Activated T-helper 2 cell treated with anti-CD3 and anti-CD28 coated beads, Interferon-gamma antibody, Interleukin-2, Interleukin-4, amounts not matched to agents 10 μg/mL and 5 μg/mL and 100 μg/mL, durations not matched to agents 14 hours and 24 hours and 36 hours (primary cell): ENCODE measurements at regions of chr10 and their contacts with region 1.

Region 1: GRCh38 chr10:114615600-114616007 is 42.5 kb downstream of the ABLIM1 start:
- DNase-seq: peak; percentile 16
- H3K4me3 Mint-ChIP-seq: no peak overlapping the region
- H3K27ac Mint-ChIP-seq: peak overlapping the region; percentile 44
- H3K4me1 Mint-ChIP-seq: peaks cover 30% of the 10 kb centered on the region
- H3K27me3 Mint-ChIP-seq: no peaks in the 10 kb centered on the region

Region 2: GRCh38 chr10:114173921-114174694 is 441.5 kb before region 1 on chr10 and contains the start of gene CCDC186:
- intact Hi-C with region 1: loop called (anchors 5 kb)
- DNase-seq: peak; percentile 95
- H3K4me3 Mint-ChIP-seq: peak within 1 kb of the TSS; percentile 97
- H3K27ac Mint-ChIP-seq: peak within 1 kb of the TSS; percentile 95
- H3K4me1 Mint-ChIP-seq: peaks cover 24% of the 10 kb centered on the region
- H3K27me3 Mint-ChIP-seq: peaks cover 26% of the 10 kb centered on the region
- total RNA-seq, gene CCDC186: 11.3 and 13.9 TPM in 2 replicates

Region 3: DNA sequence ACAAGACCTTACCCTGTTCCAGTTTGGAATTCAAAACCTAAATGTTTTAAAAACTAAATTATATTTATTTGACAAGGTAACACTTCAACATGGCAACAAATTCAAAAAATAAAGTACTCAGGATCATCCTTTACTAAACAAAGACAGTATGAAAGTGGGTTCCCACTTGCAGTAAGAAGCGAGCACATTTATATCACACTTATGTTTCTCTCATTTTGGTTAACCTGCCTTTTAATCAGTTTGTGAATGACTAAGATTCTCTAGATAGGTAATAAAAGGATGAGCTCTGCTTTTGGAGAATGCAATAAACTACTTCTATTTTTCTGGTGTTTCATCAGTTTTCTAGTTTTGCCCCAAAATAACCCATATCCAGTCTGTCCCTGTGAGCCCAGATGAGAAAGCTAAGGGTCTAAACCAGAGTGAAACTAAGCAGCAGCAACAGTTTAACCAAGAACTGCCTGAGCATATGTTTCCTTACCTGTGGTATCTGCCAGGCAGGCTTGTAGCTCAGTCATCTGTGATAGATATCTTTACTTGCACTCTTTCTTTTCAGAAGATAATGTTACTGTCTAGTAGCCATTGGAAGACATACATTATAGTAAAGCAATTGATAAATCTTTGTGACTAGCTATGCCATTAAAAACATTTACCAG is 21.7 kb before region 1 on chr10:
- intact Hi-C with region 1: loop called (anchors 2 kb)
- DNase-seq: no peak
- H3K4me3 Mint-ChIP-seq: no peak overlapping the region
- H3K27ac Mint-ChIP-seq: peak overlapping the region; percentile 0
- H3K4me1 Mint-ChIP-seq: peaks cover 18% of the 10 kb centered on the region
- H3K27me3 Mint-ChIP-seq: peaks cover 13% of the 10 kb centered on the region

Region 4: GRCh38 chr10:114631666-114632417 is 16.2 kb after region 1 on chr10:
- intact Hi-C with region 1: loop called (anchors 2 kb)
- DNase-seq: no peak
- H3K4me3 Mint-ChIP-seq: peak overlapping the region; percentile 82
- H3K27ac Mint-ChIP-seq: no peak overlapping the region
- H3K4me1 Mint-ChIP-seq: peaks cover 26% of the 10 kb centered on the region
- H3K27me3 Mint-ChIP-seq: peaks cover 63% of the 10 kb centered on the region

Region 5: GRCh38 chr10:114925587-114926586 is 310.3 kb after region 1 on chr10:
- intact Hi-C with region 1: loop called (anchors 1 kb)
- DNase-seq: peak; percentile 18
- H3K4me3 Mint-ChIP-seq: no peak overlapping the region
- H3K27ac Mint-ChIP-seq: peak overlapping the region; percentile 60
- H3K4me1 Mint-ChIP-seq: peaks cover 22% of the 10 kb centered on the region
- H3K27me3 Mint-ChIP-seq: peaks cover 2% of the 10 kb centered on the region